CD8-positive, alpha-beta memory T cell (primary cell): ENCODE measurements at regions of chr15 and their contacts with region 1.

Region 1: GRCh38 chr15:101320501-101321052 is 25.5 kb upstream of the SNRPA1 start:
- DNase-seq: peak; percentile 37 to 74 (median 65)
- H3K4me3 ChIP-seq: peak overlapping the region; percentile 63
- H3K4me3 Mint-ChIP-seq: peak overlapping the region; percentile 22 to 88 (median 80)
- H3K27ac ChIP-seq: peak overlapping the region; percentile 33
- H3K27ac Mint-ChIP-seq: peak overlapping the region; percentile 75 to 98 (median 90)
- H3K4me1 ChIP-seq: peaks cover 12% of the 10 kb centered on the region
- H3K4me1 Mint-ChIP-seq: peaks cover 12 to 14% (median 13%) of the 10 kb centered on the region in 3 donors
- H3K27me3 ChIP-seq: no peaks in the 10 kb centered on the region
- H3K27me3 Mint-ChIP-seq: peaks cover 16 to 20% of the 10 kb centered on the region in 2 donors

Region 2: DNA sequence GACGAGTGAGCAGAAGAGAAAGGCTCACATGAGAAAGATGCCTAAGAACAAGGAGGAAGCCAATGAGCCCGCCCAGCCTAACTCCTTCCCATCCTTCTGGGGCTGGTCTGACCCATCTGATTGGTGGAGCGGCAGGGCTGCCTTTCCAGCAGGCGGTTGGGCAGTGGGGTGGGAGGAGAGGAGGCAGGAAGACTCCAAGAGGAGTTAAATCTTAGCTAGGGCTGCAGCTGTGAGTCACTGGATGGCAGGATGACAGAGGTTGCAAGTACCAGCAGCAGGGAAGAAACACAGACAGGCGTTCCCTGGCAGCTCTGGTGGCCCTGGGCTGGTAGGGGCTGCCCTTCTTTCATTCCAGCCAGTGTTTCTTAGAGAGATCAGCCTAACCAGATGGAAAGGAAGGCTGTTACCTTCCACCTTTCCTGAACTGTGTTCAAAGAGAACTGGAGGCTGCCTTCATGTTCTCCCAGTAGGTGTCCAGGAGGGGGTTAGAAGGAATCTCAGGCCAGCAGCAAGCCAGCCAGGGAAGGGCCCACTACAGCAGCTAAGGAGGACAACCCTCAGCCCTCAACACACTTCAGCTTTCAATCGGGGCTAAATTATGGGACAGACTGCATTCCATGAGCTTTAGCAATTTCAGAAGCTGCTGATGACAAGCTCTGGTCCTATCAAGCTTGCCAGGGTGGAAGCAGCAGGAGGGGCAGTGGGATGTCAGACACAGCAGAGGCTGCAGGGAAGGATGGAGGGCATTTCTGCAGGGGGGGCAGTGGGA is 119.0 kb before region 1 on chr15:
- CTCF ChIA-PET with region 1: no interaction called
- POLR2A ChIA-PET with region 1: no interaction called
- DNase-seq: no peak
- H3K4me3 ChIP-seq: no peak overlapping the region
- H3K4me3 Mint-ChIP-seq: peak overlapping the region in 3 of 7 donors; percentile 5 to 74 (median 49)
- H3K27ac ChIP-seq: no peak overlapping the region
- H3K27ac Mint-ChIP-seq: peak overlapping the region in 1 of 8 donors; percentile 70
- H3K4me1 ChIP-seq: peaks cover 49% of the 10 kb centered on the region
- H3K4me1 Mint-ChIP-seq: peaks cover 72 to 90% (median 84%) of the 10 kb centered on the region in 3 donors
- H3K27me3 ChIP-seq: no peaks in the 10 kb centered on the region
- H3K27me3 Mint-ChIP-seq: peaks cover 0 to 2% of the 10 kb centered on the region in 2 donors

Region 3: DNA sequence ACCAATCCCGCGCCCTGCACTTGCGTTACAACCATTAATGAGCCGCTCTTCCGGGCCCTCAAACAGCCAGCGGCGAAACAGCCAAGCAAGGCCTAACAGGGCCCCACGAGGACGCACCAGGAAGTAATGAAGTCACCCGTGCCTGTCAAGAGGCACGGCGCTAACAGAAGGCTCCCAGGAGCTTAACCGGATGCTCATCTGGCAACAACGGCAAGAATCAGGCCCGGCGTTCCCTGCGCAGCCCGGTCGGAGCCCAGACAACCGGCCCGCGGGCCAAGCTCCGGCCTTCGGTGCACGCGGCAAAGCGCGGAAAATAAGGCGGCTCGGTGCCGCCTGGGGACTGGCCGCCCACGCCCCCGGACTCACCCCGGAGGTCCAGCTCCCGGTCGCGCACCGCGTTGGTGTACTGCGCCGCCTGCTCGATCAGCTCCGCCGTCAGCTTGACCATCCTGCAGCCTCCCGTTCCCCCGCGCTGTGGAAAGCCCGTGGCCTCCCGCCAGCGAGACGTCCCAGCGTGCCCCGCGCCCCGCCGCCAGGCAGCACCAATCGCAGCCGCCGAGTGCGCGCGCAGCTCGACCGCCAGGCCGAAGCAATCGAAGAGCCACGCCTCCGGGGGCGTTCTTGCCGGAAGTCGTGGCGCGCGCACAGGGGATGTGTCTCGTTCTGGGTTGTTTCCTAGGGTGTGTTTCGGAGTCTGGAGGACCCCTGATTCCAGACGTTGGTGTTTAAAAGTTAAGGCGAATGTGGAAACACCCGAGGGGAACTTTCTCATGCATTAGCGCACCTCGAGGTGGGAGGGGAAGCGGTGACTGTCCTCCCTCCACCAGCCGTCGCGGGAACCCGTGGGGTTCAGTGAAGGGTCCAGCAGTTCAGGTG is 25.6 kb before region 1 on chr15 and contains the start of gene SNRPA1:
- CTCF ChIA-PET with region 1: interaction called, 11 read pairs
- POLR2A ChIA-PET with region 1: interaction called, 7 read pairs
- DNase-seq: peak; percentile 95 to 99 (median 98)
- H3K4me3 ChIP-seq: peak within 1 kb of the TSS; percentile 93
- H3K4me3 Mint-ChIP-seq: peak within 1 kb of the TSS; percentile 91 to 96 (median 93)
- H3K27ac ChIP-seq: peak within 1 kb of the TSS; percentile 98
- H3K27ac Mint-ChIP-seq: peak within 1 kb of the TSS; percentile 87 to 98 (median 97)
- H3K4me1 ChIP-seq: peaks cover 28% of the 10 kb centered on the region
- H3K4me1 Mint-ChIP-seq: peaks cover 46 to 59% (median 48%) of the 10 kb centered on the region in 3 donors
- H3K27me3 ChIP-seq: no peaks in the 10 kb centered on the region
- H3K27me3 Mint-ChIP-seq: peaks cover 0 to 3% of the 10 kb centered on the region in 2 donors
- total RNA-seq, gene SNRPA1: 213 to 225 TPM

Region 4: DNA sequence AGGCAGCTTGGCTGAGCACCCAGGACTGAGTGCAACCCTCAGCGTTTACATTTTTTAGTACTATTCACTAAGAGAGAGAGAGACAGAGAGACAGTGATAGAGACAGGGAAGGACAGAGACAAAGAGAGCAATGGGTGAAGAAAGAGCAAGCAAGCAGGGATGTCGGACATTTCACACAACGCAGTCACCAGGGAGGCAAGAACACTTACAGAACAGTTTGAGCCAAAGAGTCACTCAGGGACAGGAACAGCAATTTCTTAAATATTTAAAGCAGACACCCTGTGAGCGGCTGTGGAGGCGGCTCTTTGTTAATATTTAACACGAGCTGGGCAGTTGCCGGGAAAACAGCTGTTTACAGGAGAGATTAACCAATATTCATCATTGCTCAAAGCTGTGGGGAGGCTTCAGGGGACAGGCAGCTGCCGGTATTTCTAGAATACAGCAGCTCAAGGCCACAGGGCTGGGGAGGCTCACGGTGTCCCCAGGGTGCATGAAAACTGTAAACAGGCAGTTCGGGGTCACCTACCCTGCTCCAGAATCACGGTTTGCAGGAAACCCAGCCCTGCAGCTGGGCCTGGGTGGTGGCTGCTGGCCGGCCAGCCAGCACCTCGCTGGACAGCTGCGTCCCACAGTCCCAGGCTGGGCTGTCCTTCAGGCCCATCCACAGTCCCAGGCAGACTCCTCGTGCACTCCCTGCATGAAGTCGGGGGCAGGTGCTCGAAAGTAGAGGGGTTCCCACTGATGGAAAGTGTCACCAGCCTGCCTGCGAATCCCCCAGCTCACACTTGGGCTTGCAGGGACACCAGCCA is 207.7 kb after region 1 on chr15:
- CTCF ChIA-PET with region 1: no interaction called
- POLR2A ChIA-PET with region 1: no interaction called
- DNase-seq: no peak
- H3K4me3 ChIP-seq: no peak overlapping the region
- H3K4me3 Mint-ChIP-seq: no peak overlapping the region
- H3K27ac ChIP-seq: no peak overlapping the region
- H3K27ac Mint-ChIP-seq: no peak overlapping the region
- H3K4me1 ChIP-seq: no peaks in the 10 kb centered on the region
- H3K4me1 Mint-ChIP-seq: no peaks in the 10 kb centered on the region
- H3K27me3 ChIP-seq: no peaks in the 10 kb centered on the region
- H3K27me3 Mint-ChIP-seq: peaks cover 7 to 41% of the 10 kb centered on the region in 2 donors